Esophagus muscularis mucosa (tissue), 4 donors: ENCODE measurements at regions of chr17 and their contacts with region 1.

Region 1: DNA sequence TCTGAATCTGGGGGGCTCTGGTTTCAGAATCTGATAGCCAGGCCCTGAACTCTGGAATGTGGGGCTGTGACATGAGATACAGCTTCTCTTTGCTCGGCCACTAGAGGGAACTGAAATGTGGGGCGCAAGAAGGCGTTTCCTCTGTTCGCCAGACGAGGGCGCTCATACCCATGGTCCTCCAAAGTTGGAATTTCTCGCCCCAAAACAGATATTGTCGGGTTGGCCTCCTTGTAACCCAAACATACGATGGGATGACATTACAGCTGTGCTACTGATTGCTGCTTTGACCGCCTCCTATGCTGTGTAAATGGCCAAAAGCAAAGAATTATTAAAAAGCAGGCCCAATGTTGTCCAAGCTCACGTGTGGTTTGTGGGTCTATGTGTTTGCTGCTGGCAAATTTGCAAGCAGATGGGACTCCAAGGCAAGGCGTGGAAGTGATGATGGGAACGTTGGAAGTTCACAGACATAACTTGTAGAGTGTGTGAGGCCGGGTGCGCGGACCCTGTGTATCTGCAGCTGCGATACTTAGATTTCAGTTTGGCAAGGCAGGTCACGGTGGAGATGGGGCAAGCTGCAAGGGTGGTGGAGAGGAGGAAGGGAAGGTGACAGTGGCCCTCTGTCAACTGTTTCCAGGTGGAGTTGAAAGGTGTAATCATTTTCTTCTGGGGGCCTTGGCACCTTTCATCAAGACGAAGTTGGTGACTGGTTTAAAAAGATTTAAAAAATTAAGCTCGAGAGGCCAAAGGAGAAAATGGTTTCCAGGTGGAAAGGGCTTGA is 13.0 kb upstream of the MSI2 start:
- DNase-seq: no peak
- H3K4me3 ChIP-seq: no peak overlapping the region
- H3K27ac ChIP-seq: no peak overlapping the region
- H3K4me1 ChIP-seq: peaks cover 7 to 16% (median 9%) of the 10 kb centered on the region in 4 donors
- H3K27me3 ChIP-seq: no peaks in the 10 kb centered on the region
- CTCF ChIP-seq: peak; percentile 98 to 100 (median 99)
- EP300 ChIP-seq: no peak
- POLR2A ChIP-seq: no peak

Region 2: DNA sequence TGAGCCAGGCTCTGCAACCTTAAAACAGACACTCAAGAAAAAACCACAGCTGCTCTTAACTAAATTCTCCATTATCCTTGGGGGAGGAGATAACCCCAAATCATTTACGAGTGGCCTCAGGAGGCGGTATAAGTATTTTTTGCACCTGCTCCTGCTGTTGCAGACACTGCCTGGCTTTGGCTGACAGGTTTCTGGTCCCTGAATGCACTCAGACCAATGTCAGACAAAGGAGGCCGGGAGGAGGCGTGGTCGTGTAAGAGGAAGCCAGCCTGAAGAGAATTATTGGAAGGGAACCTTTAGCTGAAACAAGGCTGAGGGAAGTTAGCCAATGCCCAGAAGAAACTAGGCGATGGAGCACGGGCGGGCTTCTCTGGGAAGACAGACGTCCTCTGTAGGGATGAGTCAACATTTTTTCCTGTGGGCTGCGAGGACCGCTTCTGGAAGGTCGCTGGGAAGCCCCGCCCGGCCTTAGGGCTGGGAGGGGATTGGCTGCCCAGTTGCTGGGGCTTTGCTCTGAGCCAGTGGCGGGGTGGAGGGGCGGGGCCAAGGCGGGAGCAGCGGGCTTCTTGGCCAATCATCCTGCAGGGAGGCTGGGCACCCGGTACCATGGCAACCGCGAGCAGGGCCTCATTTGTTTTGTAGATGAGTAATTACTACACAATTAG is 419.4 kb after region 1 on chr17:
- intact Hi-C with region 1: loop called (anchors 5 kb)
- DNase-seq: peak; percentile 98
- H3K4me3 ChIP-seq: peak overlapping the region; percentile 29 to 48 (median 40)
- H3K27ac ChIP-seq: peak overlapping the region; percentile 86 to 92 (median 90)
- H3K4me1 ChIP-seq: peaks cover 31 to 61% (median 57%) of the 10 kb centered on the region in 4 donors
- H3K27me3 ChIP-seq: no peaks in the 10 kb centered on the region
- CTCF ChIP-seq: peak in 2 of 3 experiments; percentile 11 to 21
- EP300 ChIP-seq: no peak
- POLR2A ChIP-seq: no peak